ENCODE measurements at regions of chr12 and their contacts with region 1.

Region 1: DNA sequence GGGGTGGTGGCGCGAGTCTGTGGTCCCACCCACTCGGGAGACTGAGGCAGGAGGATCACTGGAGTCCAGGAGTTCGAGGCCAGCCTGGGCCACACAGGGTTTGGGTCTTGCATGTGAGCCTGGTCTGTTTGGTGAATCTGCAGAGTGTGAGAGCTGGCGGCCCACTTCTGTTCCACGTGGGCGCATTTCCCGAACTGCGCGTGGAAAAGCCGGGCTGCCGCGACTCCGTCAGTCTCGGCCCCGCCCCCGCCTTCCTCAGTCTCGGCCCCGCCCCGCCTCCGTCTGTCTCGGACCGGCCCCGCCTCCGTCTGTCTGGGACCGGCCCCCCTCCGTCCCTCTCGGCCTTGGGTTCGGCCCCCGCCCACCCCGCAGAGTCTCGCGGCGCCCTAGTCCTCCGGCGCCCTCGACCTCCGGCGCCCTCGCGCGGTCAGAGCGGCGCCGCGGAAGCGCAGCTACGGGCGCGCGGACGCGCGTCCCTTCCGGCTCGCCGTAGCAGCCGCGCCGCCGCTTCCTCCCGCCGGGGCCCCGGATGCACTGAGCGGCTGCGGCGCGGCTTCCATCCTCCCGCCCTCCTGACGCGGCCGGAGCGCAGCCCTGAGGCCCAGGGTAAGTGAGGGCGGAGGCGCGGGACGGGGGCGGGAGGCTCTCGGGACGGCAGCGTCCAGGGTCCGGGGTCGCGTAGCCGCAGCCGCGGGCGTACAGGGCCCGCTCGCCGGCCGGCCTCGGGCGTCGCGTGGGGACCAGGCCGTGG is at the start of gene EP400:
- DNase-seq: peak; percentile 98
- ATAC-seq: peak; percentile 98
- total RNA-seq, gene EP400: 12.3 TPM

Region 2: GRCh38 chr12:131830335-131830913 is 119.2 kb before region 1 on chr12:
- intact Hi-C with region 1: loop called (anchors 10 kb)
- DNase-seq: peak; percentile 90
- ATAC-seq: peak; percentile 93